Dorsolateral prefrontal cortex (tissue), 120 donors: ENCODE measurements at regions of chr2 and their contacts with region 1.

Region 1: DNA sequence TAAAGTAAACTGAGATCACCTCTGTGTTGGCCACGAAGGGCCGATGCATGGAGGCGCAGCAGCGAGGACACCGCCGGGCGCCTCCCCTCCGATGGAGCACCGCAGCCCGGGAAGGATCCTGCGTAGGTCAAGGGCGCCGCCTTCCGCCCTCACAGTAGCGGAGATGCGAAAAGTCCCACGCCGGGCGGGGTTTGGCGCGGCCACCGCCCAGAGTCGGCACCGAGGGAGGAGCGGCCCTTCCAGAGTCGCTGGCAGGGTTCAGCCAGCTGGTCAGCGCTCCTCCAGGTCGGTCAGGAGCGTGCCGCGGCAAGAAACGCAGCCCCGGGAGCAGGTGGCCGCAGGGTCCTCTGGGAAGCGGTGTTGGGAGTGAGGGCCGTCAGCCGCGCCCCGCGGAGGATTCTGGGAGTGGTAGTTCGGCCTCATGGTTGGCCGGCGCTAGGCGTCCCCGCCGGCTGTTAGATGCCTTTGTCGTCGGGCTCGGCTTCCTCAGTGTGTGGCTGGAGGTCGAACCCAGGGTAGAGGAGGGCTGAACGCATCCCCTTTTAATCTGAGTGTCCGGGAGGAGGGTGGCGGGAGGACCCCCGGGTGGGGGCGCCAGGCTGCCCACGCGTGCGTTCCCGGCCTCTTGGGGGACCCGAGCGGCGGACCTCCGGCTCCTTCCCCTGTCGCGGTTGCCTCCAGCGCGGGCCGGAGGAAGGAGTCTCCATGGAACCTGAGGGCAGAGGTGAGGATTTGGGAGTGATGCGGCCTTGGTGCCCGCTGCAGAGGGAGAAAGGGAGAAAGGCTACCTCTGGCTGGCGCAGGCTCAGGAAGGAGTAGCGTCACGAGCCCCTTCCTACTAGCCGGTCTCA is at the start of gene ZNF892:
- DNase-seq: peak; percentile 87 to 95 (median 92)
- H3K4me3 ChIP-seq: peak within 1 kb of the TSS; percentile 66 to 98 (median 87)
- H3K27ac ChIP-seq: peak within 1 kb of the TSS in 58 of 59 donors; percentile 34 to 97 (median 90)
- H3K27me3 ChIP-seq: no peaks in the 10 kb centered on the region
- CTCF ChIP-seq: peak; percentile 19 to 89 (median 61)
- total RNA-seq, gene ZNF892: 11.3 to 29.3 (median 18.7) TPM

Region 2: DNA sequence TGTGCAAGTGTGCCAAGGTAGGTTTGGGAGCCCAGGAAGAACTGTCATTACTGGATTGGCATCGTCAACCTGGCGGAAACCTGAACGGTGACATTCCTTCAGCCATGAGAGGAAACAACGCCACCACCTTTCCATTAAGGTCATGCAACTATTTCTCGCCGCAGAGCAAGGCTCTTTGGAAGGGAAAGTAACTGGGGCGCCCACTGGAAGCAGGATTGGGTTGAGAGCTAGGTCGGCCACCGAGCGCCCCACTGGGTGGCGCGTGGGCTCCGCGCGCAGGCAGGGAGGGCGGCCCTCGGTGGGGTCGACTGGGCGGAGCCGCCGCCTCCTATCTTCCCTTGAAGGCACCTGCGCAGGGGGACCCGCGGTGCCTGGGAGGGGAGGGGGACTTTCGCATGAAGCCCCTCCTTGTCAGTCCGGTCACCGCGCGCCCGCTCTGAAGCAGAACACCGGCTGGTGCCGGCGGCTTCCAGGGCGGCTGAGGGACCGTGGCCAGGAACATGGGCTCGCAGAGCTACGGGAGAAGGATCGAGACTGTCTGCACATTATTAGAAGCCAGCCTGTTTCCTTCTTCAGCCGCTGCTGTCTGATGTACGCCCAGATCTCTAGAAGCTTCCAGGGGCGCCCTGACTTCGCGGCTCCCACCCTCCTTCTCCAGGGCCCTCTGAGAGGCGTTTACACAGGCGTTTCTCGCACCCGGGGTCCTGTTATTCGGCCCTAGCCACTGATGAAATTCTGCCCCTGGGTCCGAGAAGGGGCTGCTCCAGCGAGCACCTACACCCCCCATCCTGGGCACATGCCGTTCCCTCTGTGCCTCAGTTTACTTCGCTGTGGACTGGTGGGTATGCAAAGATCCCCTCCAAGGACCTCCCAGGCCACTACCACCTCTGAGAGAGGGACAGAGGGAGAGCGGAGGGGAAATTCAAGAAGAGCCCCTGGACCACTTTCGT is 209.1 kb before region 1 on chr2:
- intact Hi-C with region 1: loop called in 1 of 2 experiments (anchors 10 kb)
- DNase-seq: peak in 4 of 10 donors; percentile 21 to 58 (median 26)
- H3K4me3 ChIP-seq: peak overlapping the region in 56 of 59 donors; percentile 16 to 69 (median 50)
- H3K27ac ChIP-seq: peak overlapping the region in 4 of 59 donors; percentile 18 to 62 (median 50)
- H3K27me3 ChIP-seq: peaks cover 0 to 36% (median 16%) of the 10 kb centered on the region in 45 donors
- CTCF ChIP-seq: peak in 53 of 56 donors; percentile 12 to 81 (median 52)

Region 3: GRCh38 chr2:95165129-95166064 is 41.9 kb before region 1 on chr2 and contains the start of gene ZNF2:
- intact Hi-C with region 1: loop called (anchors 2 kb)
- DNase-seq: peak; percentile 97 to 99 (median 98)
- H3K4me3 ChIP-seq: peak within 1 kb of the TSS; percentile 63 to 100 (median 92)
- H3K27ac ChIP-seq: peak within 1 kb of the TSS; percentile 53 to 99 (median 93)
- H3K27me3 ChIP-seq: no peaks in the 10 kb centered on the region
- CTCF ChIP-seq: peak in 40 of 56 donors; percentile 9 to 67 (median 41)
- total RNA-seq, gene ZNF2: 4.3 to 9.8 (median 6.6) TPM

Region 4: GRCh38 chr2:95314964-95315611 is 107.8 kb after region 1 on chr2:
- intact Hi-C with region 1: no loop called
- DNase-seq: peak in 9 of 10 donors; percentile 42 to 84 (median 75)
- H3K4me3 ChIP-seq: peak overlapping the region in 4 of 59 donors; percentile 4 to 16 (median 11)
- H3K27ac ChIP-seq: peak overlapping the region in 57 of 59 donors; percentile 42 to 99 (median 79)
- H3K27me3 ChIP-seq: no peaks in the 10 kb centered on the region
- CTCF ChIP-seq: peak; percentile 46 to 95 (median 83)